H1 (cell line): ENCODE measurements at regions of chr4 and their contacts with region 1.

Region 1: DNA sequence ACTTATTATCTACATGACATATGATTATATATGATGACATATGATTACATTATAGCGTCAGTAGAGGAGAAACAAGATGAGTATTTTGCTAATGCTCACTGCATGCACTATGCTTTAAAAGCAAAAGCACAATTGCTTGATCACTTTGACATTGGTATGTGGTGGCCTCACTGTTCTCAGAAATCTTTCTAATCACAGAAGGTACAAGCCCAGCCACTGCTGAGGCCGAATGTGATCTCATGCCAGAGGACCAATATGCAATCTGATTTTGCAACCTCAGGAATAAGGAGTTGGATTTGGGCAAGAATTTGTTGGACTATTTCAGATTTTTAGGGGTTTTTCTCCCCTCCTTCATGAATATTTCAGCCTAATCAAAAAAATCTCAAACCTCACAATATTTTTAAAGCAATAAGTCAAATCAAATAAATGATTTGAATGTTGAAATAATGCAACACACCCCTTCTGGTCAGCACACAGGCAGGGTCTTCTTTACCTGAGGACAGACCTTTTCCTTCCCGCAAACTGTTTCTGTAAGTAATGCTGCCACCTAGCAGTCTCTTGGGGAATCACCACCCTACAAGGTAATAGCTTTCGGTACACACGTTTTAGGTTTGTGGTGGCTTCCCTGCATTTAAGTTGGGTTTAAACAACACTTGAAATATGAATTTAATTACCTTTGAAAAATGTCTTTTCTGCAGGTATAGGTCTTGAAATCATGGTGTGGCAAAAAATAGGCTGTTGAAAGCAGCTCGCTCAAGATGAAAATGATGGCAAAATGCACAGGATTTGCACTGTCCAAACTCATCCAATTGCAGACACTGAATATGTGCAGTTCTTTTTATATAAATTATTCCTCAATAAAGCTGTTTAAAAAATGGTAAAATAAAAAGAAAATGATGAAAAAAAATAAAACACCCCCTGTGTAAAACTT is 4.8 kb upstream of the CXCL13 start:
- DNase-seq: no peak
- H3K4me3 ChIP-seq: no peak overlapping the region
- H3K27ac ChIP-seq: no peak overlapping the region
- H3K4me1 ChIP-seq: no peaks in the 10 kb centered on the region
- H3K27me3 ChIP-seq: no peaks in the 10 kb centered on the region; a peak in 1 of 7 replicates
- CTCF ChIP-seq: peak; percentile 10 to 88 (median 80)
- EP300 ChIP-seq: no peak
- POLR2A ChIP-seq: no peak
- RAD21 ChIP-seq: peak; percentile 69 to 77

Region 2: GRCh38 chr4:77385124-77385969 is 215.4 kb before region 1 on chr4:
- CTCF ChIA-PET with region 1: interaction called, 17 read pairs
- POLR2A ChIA-PET with region 1: no interaction called
- DNase-seq: peak; percentile 33 to 73
- H3K4me3 ChIP-seq: no peak overlapping the region
- H3K27ac ChIP-seq: no peak overlapping the region
- H3K4me1 ChIP-seq: peaks cover 0 to 4% (median 3%) of the 10 kb centered on the region in 4 experiments; a peak in 2 of 7 replicates
- H3K27me3 ChIP-seq: peaks cover 0 to 1% (median 0%) of the 10 kb centered on the region in 4 experiments; a peak in 1 of 7 replicates
- CTCF ChIP-seq: peak; percentile 61 to 93 (median 92)
- EP300 ChIP-seq: no peak
- POLR2A ChIP-seq: no peak
- RAD21 ChIP-seq: peak; percentile 89 to 91

Region 3: DNA sequence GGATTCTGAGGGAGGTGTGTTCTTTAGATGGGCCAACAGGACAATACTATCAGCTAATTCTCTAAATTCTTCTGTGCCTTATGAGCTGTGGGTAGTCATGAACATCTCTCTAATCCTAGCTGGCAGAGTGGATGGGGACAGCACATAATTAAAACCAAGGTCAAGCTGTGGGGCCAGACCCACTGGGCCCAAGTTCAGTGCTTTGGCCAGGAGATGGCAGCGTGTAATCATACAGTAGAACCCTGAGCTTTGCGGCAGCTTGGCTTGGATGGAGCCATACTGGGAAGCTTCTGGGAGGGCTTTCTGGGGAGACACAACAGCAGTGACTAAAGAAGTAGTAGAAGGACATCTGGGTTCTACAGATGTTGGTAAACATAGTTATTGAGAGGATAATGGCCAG is 135.5 kb before region 1 on chr4:
- CTCF ChIA-PET with region 1: interaction called, 116 read pairs
- POLR2A ChIA-PET with region 1: no interaction called
- DNase-seq: peak in 1 of 2 experiments; percentile 49
- H3K4me3 ChIP-seq: no peak overlapping the region
- H3K27ac ChIP-seq: no peak overlapping the region
- H3K4me1 ChIP-seq: no peaks in the 10 kb centered on the region
- H3K27me3 ChIP-seq: no peaks in the 10 kb centered on the region
- CTCF ChIP-seq: peak; percentile 59 to 71 (median 65)
- EP300 ChIP-seq: no peak
- POLR2A ChIP-seq: no peak
- RAD21 ChIP-seq: peak; percentile 77 to 83

Region 4: GRCh38 chr4:77579406-77580076 is 21.2 kb before region 1 on chr4:
- CTCF ChIA-PET with region 1: interaction called, 77 read pairs
- POLR2A ChIA-PET with region 1: no interaction called
- DNase-seq: no peak
- H3K4me3 ChIP-seq: no peak overlapping the region
- H3K27ac ChIP-seq: no peak overlapping the region
- H3K4me1 ChIP-seq: no peaks in the 10 kb centered on the region
- H3K27me3 ChIP-seq: no peaks in the 10 kb centered on the region
- CTCF ChIP-seq: no peak
- EP300 ChIP-seq: no peak
- POLR2A ChIP-seq: no peak
- RAD21 ChIP-seq: no peak

Region 5: DNA sequence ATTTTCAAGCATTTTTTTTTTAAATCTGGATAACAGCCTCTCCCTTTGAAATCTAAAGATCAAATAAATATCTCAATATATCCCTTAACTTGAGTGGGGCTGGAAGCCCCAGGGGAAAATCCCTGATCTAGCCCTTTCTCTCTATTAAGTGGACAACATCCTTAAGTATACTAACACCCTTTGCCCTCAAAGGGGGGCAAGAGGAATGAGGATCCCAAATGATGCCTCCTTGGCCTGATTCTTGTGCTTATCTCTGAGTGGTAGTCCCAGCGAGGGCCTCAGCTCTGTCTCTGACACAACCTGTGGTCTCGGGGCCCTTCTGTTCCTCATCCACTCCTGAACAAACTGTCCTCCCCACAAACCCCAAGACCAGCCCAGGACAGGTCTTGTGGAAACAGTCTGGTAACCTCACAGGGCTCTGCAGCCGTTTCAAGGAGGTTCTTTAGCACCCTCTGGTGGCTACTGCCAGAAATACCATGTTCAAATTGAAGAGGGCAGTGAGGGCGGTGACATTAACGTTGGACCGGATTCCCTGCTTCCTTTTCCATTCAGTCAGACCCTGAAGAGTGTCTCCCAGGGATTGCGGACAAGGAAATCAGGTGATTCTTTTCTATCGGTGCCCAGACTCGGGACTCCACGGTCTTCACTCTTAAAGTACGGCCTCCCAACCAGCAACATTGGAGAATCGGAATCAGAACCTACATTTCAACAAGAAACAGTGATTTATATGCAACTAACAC is 17.8 kb after region 1 on chr4:
- CTCF ChIA-PET with region 1: interaction called, 200 read pairs
- POLR2A ChIA-PET with region 1: no interaction called
- DNase-seq: peak; percentile 59 to 83
- H3K4me3 ChIP-seq: no peak overlapping the region
- H3K27ac ChIP-seq: no peak overlapping the region
- H3K4me1 ChIP-seq: no peaks in the 10 kb centered on the region
- H3K27me3 ChIP-seq: no peaks in the 10 kb centered on the region
- CTCF ChIP-seq: peak; percentile 47 to 92 (median 85)
- EP300 ChIP-seq: no peak
- POLR2A ChIP-seq: no peak
- RAD21 ChIP-seq: peak; percentile 83 to 90